Calu3 (cell line): ENCODE measurements at regions of chr6 and their contacts with region 1.

Region 1: DNA sequence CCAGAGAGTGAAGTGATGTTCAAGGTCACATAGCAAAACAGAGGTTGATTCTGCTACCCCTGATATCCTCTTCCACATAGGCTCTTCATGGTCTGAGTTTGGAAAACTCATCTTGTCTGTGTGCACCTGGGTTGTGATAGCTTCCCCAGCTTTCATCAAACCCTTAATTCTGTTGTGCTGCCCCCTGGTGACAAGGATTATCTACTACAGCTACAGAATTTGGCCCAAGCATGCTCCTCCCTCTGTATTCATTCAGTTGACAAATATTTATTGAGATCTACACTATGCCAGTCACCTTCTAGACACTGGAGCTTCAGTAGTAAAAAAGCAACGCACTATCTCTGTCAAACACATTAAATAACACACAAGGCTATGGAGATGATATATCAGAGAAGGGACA is 50.4 kb downstream of the SMPDL3A start:
- DNase-seq: peak; percentile 73
- H3K4me3 Mint-ChIP-seq: no peak overlapping the region
- H3K27ac Mint-ChIP-seq: no peak overlapping the region
- H3K4me1 Mint-ChIP-seq: peaks cover 8% of the 10 kb centered on the region
- H3K27me3 Mint-ChIP-seq: peaks cover 25% of the 10 kb centered on the region
- CTCF ChIP-seq: no peak

Region 2: GRCh38 chr6:122491919-122492555 is 347.4 kb before region 1 on chr6:
- CTCF ChIA-PET with region 1: interaction called, 12 read pairs
- intact Hi-C with region 1: loop called (anchors 5 kb)
- DNase-seq: peak; percentile 81
- H3K4me3 Mint-ChIP-seq: no peak overlapping the region
- H3K27ac Mint-ChIP-seq: no peak overlapping the region
- H3K4me1 Mint-ChIP-seq: peaks cover 23% of the 10 kb centered on the region
- H3K27me3 Mint-ChIP-seq: no peaks in the 10 kb centered on the region
- CTCF ChIP-seq: peak; percentile 79

Region 3: DNA sequence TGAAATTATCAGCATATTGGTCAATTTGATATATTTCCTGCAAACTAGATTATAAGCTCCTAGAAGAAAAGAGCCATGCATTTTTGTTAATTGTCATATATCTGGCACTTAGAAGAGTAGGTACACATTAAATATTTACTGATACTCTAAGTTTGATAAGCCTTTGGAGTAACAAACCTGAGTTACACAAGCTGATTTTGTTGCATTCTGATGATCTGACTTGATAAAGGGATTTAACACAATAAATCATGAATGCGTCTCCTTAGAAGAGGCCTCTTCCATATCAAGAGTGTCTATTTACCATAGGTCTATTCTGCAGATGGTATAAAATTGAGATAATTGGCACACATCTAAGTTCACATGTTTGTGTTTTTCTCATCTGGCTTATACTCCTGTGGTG is 319.3 kb before region 1 on chr6:
- CTCF ChIA-PET with region 1: no interaction called
- intact Hi-C with region 1: no loop called
- DNase-seq: no peak
- H3K4me3 Mint-ChIP-seq: no peak overlapping the region
- H3K27ac Mint-ChIP-seq: no peak overlapping the region
- H3K4me1 Mint-ChIP-seq: no peaks in the 10 kb centered on the region
- H3K27me3 Mint-ChIP-seq: no peaks in the 10 kb centered on the region
- CTCF ChIP-seq: no peak

Region 4: GRCh38 chr6:122730775-122731386 is 108.6 kb before region 1 on chr6:
- CTCF ChIA-PET with region 1: interaction called, 52 read pairs
- intact Hi-C with region 1: loop called (anchors 1 kb)
- DNase-seq: peak; percentile 28
- H3K4me3 Mint-ChIP-seq: no peak overlapping the region
- H3K27ac Mint-ChIP-seq: no peak overlapping the region
- H3K4me1 Mint-ChIP-seq: no peaks in the 10 kb centered on the region
- H3K27me3 Mint-ChIP-seq: no peaks in the 10 kb centered on the region
- CTCF ChIP-seq: peak; percentile 73

Region 5: DNA sequence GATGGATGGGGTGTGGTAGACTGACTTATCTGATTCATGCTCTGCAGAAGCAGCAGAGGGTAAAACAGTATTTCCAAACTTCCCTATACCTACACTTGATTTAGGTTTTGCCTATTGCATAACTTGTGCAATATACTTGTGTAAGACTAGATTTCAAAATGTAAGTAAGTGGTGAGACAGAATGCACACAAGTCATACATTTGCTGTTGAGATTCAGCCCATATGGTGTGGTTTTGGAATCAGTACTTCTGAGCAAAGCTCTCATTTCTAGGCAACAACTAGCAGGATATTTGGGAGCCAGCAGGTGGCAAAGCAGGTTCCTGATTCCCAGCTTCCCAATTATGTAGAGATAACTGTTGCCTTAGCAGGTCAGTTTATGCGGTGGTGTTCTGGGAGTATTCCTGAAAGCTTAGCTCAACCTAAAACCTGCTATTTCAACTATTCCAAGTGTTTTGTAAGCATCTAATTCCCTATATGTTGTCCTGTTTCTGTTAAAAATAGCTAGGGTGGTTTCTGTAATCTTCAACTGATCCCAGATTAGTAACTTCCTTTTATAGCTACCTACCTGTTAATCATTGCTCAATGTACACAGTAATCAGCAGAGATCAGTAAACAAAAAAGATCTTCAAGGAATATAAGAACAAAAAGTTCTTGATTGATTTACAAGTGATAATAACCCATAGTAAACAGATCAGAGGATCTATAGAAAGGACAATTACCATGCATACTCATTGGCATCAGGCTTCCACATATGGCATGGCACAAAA is 68.5 kb before region 1 on chr6:
- CTCF ChIA-PET with region 1: interaction called, 31 read pairs
- intact Hi-C with region 1: loop called (anchors 10 kb)
- DNase-seq: no peak
- H3K4me3 Mint-ChIP-seq: no peak overlapping the region
- H3K27ac Mint-ChIP-seq: no peak overlapping the region
- H3K4me1 Mint-ChIP-seq: peaks cover 17% of the 10 kb centered on the region
- H3K27me3 Mint-ChIP-seq: no peaks in the 10 kb centered on the region
- CTCF ChIP-seq: no peak

Region 6: DNA sequence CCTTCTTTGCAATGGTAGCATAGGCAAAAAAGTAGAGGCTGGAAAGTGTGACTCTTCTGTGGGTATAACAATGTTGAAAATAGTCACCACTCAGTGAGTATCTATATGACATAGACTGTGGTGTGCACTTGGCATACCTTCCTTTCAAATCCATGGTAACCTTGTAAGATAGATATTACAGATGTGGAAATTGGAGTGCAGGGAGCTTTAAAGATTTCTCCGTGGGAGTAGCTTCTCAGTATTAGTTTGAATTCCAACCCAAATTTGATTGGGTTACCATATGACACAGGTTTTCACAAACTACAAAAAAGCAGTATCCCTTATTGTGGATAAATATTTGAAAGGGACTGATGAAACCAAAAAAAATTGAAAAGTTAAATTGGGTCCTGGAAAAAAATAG is 320.4 kb after region 1 on chr6:
- CTCF ChIA-PET with region 1: no interaction called
- intact Hi-C with region 1: no loop called
- DNase-seq: no peak
- H3K4me3 Mint-ChIP-seq: no peak overlapping the region
- H3K27ac Mint-ChIP-seq: no peak overlapping the region
- H3K4me1 Mint-ChIP-seq: no peaks in the 10 kb centered on the region
- H3K27me3 Mint-ChIP-seq: no peaks in the 10 kb centered on the region
- CTCF ChIP-seq: no peak